Heart right ventricle (tissue), 16 donors: ENCODE measurements at regions of chr2 and their contacts with region 1.

Region 1: DNA sequence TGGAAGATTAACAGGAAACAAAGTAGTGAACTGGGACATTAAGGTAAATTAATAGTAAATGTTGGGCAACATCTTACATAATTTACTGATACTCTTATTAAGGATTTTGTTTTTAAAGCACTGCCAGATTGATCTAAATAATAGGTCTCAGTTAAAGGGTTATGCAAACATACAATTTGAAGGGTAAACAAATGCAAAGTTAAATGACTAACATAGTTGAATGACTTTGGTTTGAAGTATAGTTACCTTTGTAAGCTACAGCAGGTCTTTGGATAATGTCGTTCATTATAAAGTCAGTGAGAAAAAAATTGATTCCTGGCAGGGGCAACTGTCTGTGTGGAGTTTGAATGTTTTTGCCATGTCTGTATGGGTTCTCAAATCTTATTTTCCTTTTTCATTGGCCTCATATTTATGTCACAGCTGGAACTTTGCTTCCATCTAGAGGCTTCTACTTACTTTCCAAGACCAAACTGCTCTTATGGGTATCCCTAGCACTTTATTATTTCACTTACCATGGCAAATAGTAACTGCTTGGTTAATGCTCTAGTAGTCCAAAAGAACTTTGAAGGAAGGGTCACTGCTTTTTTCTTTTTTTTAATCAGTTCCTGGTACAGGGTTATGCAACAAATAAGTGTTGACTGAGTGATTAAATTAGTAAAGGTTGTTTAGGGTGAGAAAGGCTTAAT is 107.8 kb downstream of the NBEAL1 start:
- DNase-seq: no peak
- ATAC-seq: no peak
- H3K4me3 ChIP-seq: no peak overlapping the region
- H3K27ac ChIP-seq: no peak overlapping the region
- H3K4me1 ChIP-seq: no peaks in the 10 kb centered on the region
- H3K27me3 ChIP-seq: no peaks in the 10 kb centered on the region
- CTCF ChIP-seq: peak in 5 of 9 donors; percentile 2 to 29 (median 26)

Region 2: GRCh38 chr2:202577250-202578183 is 544.9 kb before region 1 on chr2:
- intact Hi-C with region 1: loop called in 1 of 10 experiments (anchors 10 kb)
- DNase-seq: no peak
- ATAC-seq: no peak
- H3K4me3 ChIP-seq: no peak overlapping the region
- H3K27ac ChIP-seq: no peak overlapping the region
- H3K4me1 ChIP-seq: no peaks in the 10 kb centered on the region
- H3K27me3 ChIP-seq: no peaks in the 10 kb centered on the region
- CTCF ChIP-seq: no peak

Region 3: GRCh38 chr2:203040966-203041521 is 81.4 kb before region 1 on chr2:
- intact Hi-C with region 1: no loop called
- DNase-seq: no peak
- ATAC-seq: no peak
- H3K4me3 ChIP-seq: no peak overlapping the region
- H3K27ac ChIP-seq: no peak overlapping the region
- H3K4me1 ChIP-seq: peaks cover 0 to 46% (median 8%) of the 10 kb centered on the region in 9 donors
- H3K27me3 ChIP-seq: no peaks in the 10 kb centered on the region
- CTCF ChIP-seq: no peak

Region 4: GRCh38 chr2:203352604-203353260 is 230.3 kb after region 1 on chr2:
- intact Hi-C with region 1: no loop called
- DNase-seq: no peak
- ATAC-seq: peak in 1 of 8 donors; percentile 35
- H3K4me3 ChIP-seq: no peak overlapping the region
- H3K27ac ChIP-seq: peak overlapping the region in 1 of 10 donors; percentile 25
- H3K4me1 ChIP-seq: peaks cover 0 to 29% (median 10%) of the 10 kb centered on the region in 9 donors
- H3K27me3 ChIP-seq: no peaks in the 10 kb centered on the region
- CTCF ChIP-seq: no peak